WTC11 (cell line): ENCODE measurements at regions of chr18 and their contacts with region 1.

Region 1: GRCh38 chr18:59899298-59900221 is at the start of gene PMAIP1:
- DNase-seq: peak; percentile 91
- ATAC-seq: peak; percentile 61
- H3K4me3 Mint-ChIP-seq: peak within 1 kb of the TSS; percentile 93
- H3K27ac Mint-ChIP-seq: peak within 1 kb of the TSS; percentile 99
- H3K4me1 Mint-ChIP-seq: peaks cover 60% of the 10 kb centered on the region
- H3K27me3 Mint-ChIP-seq: no peaks in the 10 kb centered on the region
- CTCF ChIP-seq: no peak
- total RNA-seq, gene PMAIP1: 152 to 162 TPM (median 161 TPM) in 3 replicates

Region 2: GRCh38 chr18:59861963-59862819 is 37.4 kb before region 1 on chr18:
- CTCF ChIA-PET with region 1: interaction called, 3 read pairs
- POLR2A ChIA-PET with region 1: interaction called, 91 read pairs
- DNase-seq: no peak
- ATAC-seq: no peak
- H3K4me3 Mint-ChIP-seq: no peak overlapping the region
- H3K27ac Mint-ChIP-seq: peak overlapping the region; percentile 84; the same call in 1 of the 2 replicates
- H3K4me1 Mint-ChIP-seq: peaks cover 56% of the 10 kb centered on the region
- H3K27me3 Mint-ChIP-seq: no peaks in the 10 kb centered on the region
- CTCF ChIP-seq: no peak

Region 3: GRCh38 chr18:59873641-59874040 is 25.9 kb before region 1 on chr18:
- CTCF ChIA-PET with region 1: no interaction called
- POLR2A ChIA-PET with region 1: interaction called, 10 read pairs
- DNase-seq: no peak
- ATAC-seq: no peak
- H3K4me3 Mint-ChIP-seq: no peak overlapping the region
- H3K27ac Mint-ChIP-seq: peak overlapping the region; percentile 93
- H3K4me1 Mint-ChIP-seq: peaks cover 46% of the 10 kb centered on the region
- H3K27me3 Mint-ChIP-seq: no peaks in the 10 kb centered on the region
- CTCF ChIP-seq: no peak

Region 4: DNA sequence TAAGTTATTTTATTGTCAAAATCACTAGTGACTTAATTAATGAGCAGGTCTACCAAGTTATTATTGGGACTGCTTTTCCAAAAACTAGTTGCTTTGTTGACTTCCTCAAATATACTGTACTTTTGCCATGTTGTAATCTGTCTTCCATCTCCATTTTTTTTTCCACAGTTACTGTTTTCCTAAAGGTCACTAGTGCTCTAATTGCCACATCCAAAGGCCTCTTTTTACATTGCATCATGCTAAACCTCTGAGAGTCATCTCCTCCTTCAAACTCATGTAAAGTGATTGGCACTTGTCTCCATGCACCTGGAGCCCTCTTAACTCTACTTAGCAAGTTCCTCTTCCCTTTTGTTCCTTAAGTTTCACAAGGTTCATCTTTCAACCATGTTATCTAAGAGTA is 12.0 kb after region 1 on chr18:
- CTCF ChIA-PET with region 1: no interaction called
- POLR2A ChIA-PET with region 1: no interaction called
- DNase-seq: no peak
- ATAC-seq: no peak
- H3K4me3 Mint-ChIP-seq: no peak overlapping the region
- H3K27ac Mint-ChIP-seq: no peak overlapping the region
- H3K4me1 Mint-ChIP-seq: peaks cover 36% of the 10 kb centered on the region
- H3K27me3 Mint-ChIP-seq: no peaks in the 10 kb centered on the region
- CTCF ChIP-seq: no peak

Region 5: GRCh38 chr18:60295674-60296073 is 396.1 kb after region 1 on chr18:
- CTCF ChIA-PET with region 1: no interaction called
- POLR2A ChIA-PET with region 1: no interaction called
- DNase-seq: no peak
- ATAC-seq: peak; percentile 38; the same call in 1 of the 2 replicates
- H3K4me3 Mint-ChIP-seq: no peak overlapping the region
- H3K27ac Mint-ChIP-seq: no peak overlapping the region
- H3K4me1 Mint-ChIP-seq: no peaks in the 10 kb centered on the region
- H3K27me3 Mint-ChIP-seq: no peaks in the 10 kb centered on the region
- CTCF ChIP-seq: no peak